ENCODE measurements at regions of chr10 and their contacts with region 1.

Region 1: DNA sequence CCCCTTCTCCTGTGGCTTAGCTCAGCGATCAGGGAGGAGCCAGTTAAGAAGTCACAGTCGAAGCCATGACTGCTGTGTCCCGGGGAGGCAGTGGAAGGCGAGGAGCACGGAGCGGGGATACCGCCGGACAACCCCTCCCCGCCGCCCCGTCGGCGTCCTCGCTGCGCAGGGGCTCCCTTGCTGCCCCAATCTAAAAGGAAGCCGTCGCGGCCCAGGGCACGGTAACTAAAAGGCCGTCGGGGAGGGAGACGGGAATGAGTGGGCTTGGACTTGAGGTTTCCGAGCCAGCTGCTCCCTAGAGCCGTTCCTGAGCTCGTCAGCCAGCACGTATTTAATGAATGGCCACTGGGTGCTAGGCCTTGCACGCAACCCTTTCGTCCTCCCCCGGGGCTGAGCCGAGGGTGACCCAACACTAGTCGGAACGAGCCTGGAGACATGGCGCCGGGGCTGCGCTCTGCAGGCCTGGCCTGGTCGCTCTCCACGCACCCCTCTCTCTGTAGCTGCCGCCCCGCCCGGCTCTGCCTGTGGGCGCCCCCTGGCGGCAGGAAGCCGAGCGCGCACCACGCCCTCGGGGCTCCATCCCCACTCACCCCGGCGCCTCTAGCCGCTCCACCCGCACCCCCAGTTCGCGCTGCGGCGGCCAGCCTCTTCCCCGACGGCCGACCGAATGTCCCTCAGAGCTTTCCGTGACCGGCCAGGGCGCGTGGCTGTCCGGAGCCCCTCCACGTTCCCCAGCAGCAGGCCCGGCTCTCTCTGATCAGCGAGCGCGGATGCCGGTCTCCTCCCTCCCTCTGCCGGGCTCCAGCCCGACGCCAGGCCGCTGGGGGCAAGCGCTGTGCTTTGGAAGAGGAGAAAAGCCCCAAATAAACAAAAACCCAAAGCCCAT is 29.3 kb upstream of the KCNK18 start:
- DNase-seq: peak; percentile 37 to 92 (median 80)

Region 2: GRCh38 chr10:116787893-116788665 is 380.0 kb before region 1 on chr10:
- intact Hi-C with region 1: no loop called
- DNase-seq: peak; percentile 69 to 95 (median 89)

Region 3: DNA sequence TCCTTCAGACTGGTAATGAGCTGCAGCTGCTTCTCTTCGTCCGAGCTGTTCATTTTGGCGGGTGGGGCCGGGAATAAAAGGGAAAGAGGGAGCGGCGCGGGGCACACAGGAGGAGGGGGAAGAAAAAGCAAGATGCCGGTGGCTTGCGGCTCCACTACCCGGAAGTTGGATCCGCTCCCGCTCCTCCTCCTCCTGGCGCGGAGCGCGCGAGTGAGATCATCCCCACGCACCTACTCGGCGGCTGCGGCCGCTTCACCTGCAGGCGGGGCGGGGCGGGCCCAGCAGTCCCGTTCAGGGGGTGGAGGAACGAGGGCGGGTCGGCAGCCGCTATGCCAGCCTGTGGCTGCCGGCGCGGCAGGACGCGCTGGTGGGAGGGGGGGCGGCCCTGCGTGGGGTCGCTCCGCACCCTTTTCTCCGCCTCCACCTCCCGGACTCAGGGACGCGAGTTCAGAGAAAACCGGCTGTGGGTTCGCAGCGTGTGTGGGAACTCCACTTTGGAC is 163.0 kb before region 1 on chr10 and contains the start of gene SHTN1:
- intact Hi-C with region 1: loop called (anchors 5 kb)
- DNase-seq: peak; percentile 56 to 92 (median 84)

Region 4: DNA sequence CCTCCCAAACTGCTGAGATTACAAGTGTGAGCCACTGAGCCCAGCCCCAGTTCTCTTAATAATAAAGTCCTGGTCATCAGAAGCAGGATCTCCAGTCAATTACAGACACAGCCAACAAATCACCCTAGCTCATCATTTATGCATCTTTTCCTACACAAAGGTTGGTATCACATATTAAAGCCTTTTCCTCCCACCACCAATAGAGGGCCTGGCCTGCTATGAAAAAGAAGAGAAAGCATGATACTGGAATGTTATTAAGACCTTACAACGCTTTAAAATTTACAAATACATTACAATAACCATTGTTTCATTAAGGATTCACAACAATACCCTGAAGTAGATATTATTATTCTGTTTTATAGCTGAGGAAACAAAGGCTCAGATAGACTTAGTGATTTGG is 55.8 kb before region 1 on chr10:
- intact Hi-C with region 1: loop called (anchors 10 kb)
- DNase-seq: peak in 5 of 42 donors; percentile 8 to 59 (median 39)

Region 5: DNA sequence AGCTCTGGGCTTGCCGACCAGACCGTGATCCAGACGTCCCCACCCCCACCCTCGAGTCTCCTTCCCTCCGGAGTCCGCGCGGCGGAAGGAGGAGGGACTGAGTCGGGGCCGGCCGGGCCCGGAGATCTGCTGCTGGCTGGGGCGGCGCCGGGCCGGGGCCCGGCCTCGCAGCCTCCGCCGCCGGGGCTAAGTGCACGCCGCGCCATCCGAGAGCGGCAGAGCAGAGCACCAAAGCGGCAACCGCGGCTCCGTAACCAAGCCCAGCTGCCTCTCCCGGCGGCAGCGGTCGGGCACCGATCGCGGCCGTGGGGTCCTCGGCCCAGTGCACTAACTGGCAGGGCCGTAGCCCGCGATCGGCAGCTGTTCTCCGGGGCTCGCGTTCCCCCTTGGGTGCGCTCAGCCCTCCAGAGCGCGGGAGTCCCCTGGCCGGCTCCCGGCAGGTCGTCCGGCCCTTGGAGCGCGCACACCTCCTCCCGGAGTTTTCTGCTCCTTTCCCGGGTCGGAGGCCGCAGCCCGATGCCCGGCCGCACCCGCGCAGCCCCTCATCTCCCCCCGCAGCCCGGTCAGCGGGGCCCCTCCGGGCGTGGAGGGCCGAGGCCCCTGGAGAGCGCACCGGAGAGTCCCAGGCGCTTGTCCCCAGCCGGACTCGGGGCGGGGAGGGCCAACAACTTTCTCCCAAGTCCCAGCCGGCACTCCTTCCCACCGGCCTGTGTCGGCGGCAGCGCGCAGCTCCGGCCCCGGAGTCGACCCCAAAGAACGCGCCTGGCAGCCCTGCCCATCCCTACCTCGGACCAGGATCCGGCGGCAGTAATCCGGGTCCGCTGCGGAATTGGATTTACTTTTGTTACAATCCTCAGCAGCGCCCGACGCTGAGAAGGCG is 30.8 kb before region 1 on chr10:
- intact Hi-C with region 1: loop called (anchors 1 kb)
- DNase-seq: peak in 35 of 42 donors; percentile 32 to 85 (median 61)

Measured in head of caudate nucleus (tissue), 42 donors.